Activated naive CD4-positive, alpha-beta T cell treated with anti-CD3 and anti-CD28 coated beads for 36 hours (primary cell): ENCODE measurements at regions of chr7 and their contacts with region 1.

Region 1: GRCh38 chr7:103344453-103345149 is at the start of gene DNAJC2:
- DNase-seq: peak; percentile 90
- H3K4me3 Mint-ChIP-seq: peak within 1 kb of the TSS; percentile 99
- H3K27ac Mint-ChIP-seq: peak within 1 kb of the TSS; percentile 98
- H3K4me1 Mint-ChIP-seq: peaks cover 57% of the 10 kb centered on the region
- H3K27me3 Mint-ChIP-seq: no peaks in the 10 kb centered on the region
- total RNA-seq, gene DNAJC2: 39.8 to 42.1 TPM

Region 2: GRCh38 chr7:102433219-102434038 is 911.2 kb before region 1 on chr7 and contains the start of gene ORAI2:
- CTCF ChIA-PET with region 1: no interaction called
- intact Hi-C with region 1: loop called (anchors 10 kb)
- DNase-seq: peak; percentile 81
- H3K4me3 Mint-ChIP-seq: peak within 1 kb of the TSS; percentile 79
- H3K27ac Mint-ChIP-seq: peak within 1 kb of the TSS; percentile 98
- H3K4me1 Mint-ChIP-seq: peaks cover 49% of the 10 kb centered on the region
- H3K27me3 Mint-ChIP-seq: no peaks in the 10 kb centered on the region
- total RNA-seq, gene ORAI2: 15.4 to 16.4 TPM

Region 3: GRCh38 chr7:103148994-103149807 is 195.4 kb before region 1 on chr7 and contains the start of gene NAPEPLD:
- CTCF ChIA-PET with region 1: no interaction called
- intact Hi-C with region 1: loop called (anchors 2 kb)
- DNase-seq: peak; percentile 68
- H3K4me3 Mint-ChIP-seq: peak within 1 kb of the TSS; percentile 96
- H3K27ac Mint-ChIP-seq: peak within 1 kb of the TSS; percentile 97
- H3K4me1 Mint-ChIP-seq: peaks cover 32% of the 10 kb centered on the region
- H3K27me3 Mint-ChIP-seq: no peaks in the 10 kb centered on the region
- total RNA-seq, gene NAPEPLD: 6.3 to 6.8 TPM

Region 4: DNA sequence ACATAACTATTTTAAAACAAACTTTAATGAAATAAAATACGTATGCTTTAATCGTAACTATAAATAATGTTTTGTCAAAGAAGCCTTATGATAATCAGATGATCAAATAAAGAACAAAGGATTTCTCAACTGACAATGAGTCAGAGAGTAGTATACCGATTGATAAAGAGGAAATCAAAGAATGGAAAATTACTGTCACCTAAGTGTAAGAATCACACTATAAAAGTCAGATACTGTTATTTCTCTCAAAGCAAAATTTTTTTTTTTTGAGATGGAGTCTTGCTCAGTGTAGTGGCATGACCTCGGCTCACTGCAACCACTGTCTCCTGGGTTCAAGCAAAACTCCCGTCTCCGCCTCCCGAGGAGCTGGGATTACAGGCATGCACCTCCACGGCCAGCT is 18.9 kb before region 1 on chr7:
- CTCF ChIA-PET with region 1: no interaction called
- intact Hi-C with region 1: loop called (anchors 1 kb)
- DNase-seq: no peak
- H3K4me3 Mint-ChIP-seq: no peak overlapping the region
- H3K27ac Mint-ChIP-seq: peak overlapping the region; percentile 94
- H3K4me1 Mint-ChIP-seq: peaks cover 27% of the 10 kb centered on the region
- H3K27me3 Mint-ChIP-seq: no peaks in the 10 kb centered on the region

Region 5: DNA sequence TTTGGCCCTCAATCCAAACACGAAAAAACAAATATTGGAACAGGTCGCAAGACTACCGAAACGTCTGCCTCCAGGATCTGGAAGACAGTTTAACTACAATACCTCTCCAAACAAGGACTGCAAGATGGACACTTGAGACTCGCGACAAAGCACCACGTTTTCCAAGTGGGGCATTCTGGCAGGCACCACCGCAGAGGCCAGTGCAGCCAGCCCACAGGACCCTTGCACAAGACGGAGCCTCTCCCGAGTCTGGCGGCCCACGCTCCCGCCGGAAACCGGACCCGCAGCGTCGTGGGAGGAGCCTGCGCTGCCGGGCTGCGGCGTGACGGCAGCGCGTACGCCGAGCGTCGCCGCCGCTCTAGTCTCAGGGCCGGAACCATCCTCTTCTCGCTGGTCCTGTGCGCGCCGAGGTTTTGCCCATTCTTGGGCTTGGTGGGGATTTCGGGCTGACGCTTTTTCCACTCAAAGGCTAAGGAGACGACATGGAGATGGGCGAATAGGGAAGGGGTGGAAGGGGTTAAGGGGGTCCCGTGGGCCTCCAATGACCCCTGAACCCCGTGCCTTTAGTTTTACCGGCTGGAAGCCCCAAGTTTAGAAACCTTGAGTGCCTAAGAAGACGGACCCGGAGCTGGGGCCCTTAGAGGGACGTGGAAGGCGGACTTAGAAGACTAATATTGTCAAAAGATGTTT is 863.3 kb after region 1 on chr7 and contains the start of gene ORC5:
- CTCF ChIA-PET with region 1: no interaction called
- intact Hi-C with region 1: loop called (anchors 5 kb)
- DNase-seq: peak; percentile 80
- H3K4me3 Mint-ChIP-seq: peak within 1 kb of the TSS; percentile 93
- H3K27ac Mint-ChIP-seq: peak within 1 kb of the TSS; percentile 91
- H3K4me1 Mint-ChIP-seq: peaks cover 28% of the 10 kb centered on the region
- H3K27me3 Mint-ChIP-seq: peaks cover 8% of the 10 kb centered on the region
- total RNA-seq, gene ORC5: 19.9 to 21.2 TPM